SK-N-SH (cell line): ENCODE measurements at regions of chr11 and their contacts with region 1.

Region 1: DNA sequence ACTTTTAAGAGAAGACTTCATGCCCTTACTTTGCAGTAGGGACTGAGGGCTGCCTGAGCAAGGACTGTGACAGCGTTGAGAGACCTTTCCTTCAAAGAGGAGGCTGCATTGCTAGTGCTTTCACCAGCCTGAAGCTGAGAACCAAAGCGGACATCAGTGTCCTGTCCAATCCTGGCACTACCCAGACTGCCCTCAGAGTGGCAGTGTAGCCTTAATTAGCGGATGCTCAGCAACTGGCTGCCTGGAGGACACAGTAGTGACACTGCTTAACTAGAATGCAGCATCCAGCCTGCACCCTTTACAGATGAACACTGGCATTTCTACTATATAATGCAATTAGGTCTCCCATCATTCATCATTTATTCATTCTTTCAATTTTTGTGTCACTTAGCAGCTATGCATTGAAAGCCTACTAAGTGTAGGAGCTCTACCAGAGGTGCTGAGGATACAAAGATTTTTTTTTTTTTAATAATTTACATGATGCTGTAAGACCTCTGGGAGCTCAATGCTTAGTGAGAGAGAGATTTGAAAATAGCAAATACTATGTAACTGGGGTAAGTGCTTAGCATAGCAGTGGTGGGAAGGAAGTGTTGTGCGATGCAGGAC is 36.9 kb upstream of the SLC36A4 start:
- DNase-seq: peak; percentile 78
- H3K4me3 ChIP-seq: peak overlapping the region in 1 of 2 experiments; percentile 44; a peak in 1 of 4 replicates
- H3K27ac ChIP-seq: no peak overlapping the region
- H3K4me1 ChIP-seq: no peaks in the 10 kb centered on the region; a peak in 2 of 4 replicates
- H3K27me3 ChIP-seq: peaks cover 13% of the 10 kb centered on the region
- CTCF ChIP-seq: peak; percentile 87
- EP300 ChIP-seq: no peak
- RAD21 ChIP-seq: peak; percentile 99

Region 2: GRCh38 chr11:92480499-92480898 is 754.2 kb before region 1 on chr11:
- CTCF ChIA-PET with region 1: no interaction called
- POLR2A ChIA-PET with region 1: no interaction called
- DNase-seq: no peak
- H3K4me3 ChIP-seq: no peak overlapping the region
- H3K27ac ChIP-seq: no peak overlapping the region
- H3K4me1 ChIP-seq: no peaks in the 10 kb centered on the region
- H3K27me3 ChIP-seq: no peaks in the 10 kb centered on the region
- CTCF ChIP-seq: no peak
- EP300 ChIP-seq: no peak
- RAD21 ChIP-seq: no peak

Region 3: GRCh38 chr11:93084727-93085505 is 149.8 kb before region 1 on chr11:
- CTCF ChIA-PET with region 1: no interaction called
- POLR2A ChIA-PET with region 1: no interaction called
- DNase-seq: no peak
- H3K4me3 ChIP-seq: no peak overlapping the region
- H3K27ac ChIP-seq: no peak overlapping the region
- H3K4me1 ChIP-seq: no peaks in the 10 kb centered on the region
- H3K27me3 ChIP-seq: no peaks in the 10 kb centered on the region
- CTCF ChIP-seq: no peak
- EP300 ChIP-seq: no peak
- RAD21 ChIP-seq: no peak

Region 4: GRCh38 chr11:93248602-93249001 is 13.9 kb after region 1 on chr11:
- CTCF ChIA-PET with region 1: interaction called, 21 read pairs
- POLR2A ChIA-PET with region 1: no interaction called
- DNase-seq: no peak
- H3K4me3 ChIP-seq: no peak overlapping the region
- H3K27ac ChIP-seq: no peak overlapping the region
- H3K4me1 ChIP-seq: no peaks in the 10 kb centered on the region
- H3K27me3 ChIP-seq: no peaks in the 10 kb centered on the region
- CTCF ChIP-seq: peak; percentile 42
- EP300 ChIP-seq: no peak
- RAD21 ChIP-seq: no peak; the same call in 1 of the 2 replicates

Region 5: DNA sequence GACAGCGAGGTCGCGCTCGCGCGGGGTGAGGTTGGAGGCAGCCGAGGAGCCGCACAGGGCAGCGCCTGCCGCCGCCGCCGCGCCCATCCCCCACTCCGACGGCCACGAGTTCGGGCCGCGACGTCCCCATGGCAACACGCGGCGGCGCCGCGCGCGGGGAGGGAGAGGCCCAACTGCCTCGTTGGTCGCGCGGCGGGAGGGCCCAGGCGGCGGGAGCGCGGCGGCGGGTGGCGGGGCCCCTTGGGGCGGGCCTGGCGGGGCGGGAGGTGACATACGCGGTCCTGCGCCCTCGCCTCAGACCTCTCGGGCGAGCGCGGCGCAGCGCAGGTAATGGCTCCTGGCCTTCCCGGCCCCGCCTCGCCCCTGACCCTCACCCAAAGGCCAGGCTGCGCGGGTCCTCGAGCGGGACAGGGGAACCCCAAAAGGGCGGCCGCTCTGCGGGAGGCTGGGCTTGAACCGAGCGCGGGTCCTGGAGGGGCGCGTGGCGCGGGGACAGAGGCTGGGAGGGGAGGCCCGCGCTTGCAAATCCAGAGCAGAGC is 95.8 kb after region 1 on chr11 and contains the start of gene DEUP1:
- CTCF ChIA-PET with region 1: no interaction called
- POLR2A ChIA-PET with region 1: no interaction called
- DNase-seq: peak; percentile 80
- H3K4me3 ChIP-seq: peak within 1 kb of the TSS in 1 of 2 experiments; percentile 36; a peak in 2 of 4 replicates
- H3K27ac ChIP-seq: no peak within 1 kb of the TSS
- H3K4me1 ChIP-seq: no peaks in the 10 kb centered on the region; a peak in 1 of 4 replicates
- H3K27me3 ChIP-seq: no peaks in the 10 kb centered on the region
- CTCF ChIP-seq: no peak
- EP300 ChIP-seq: no peak
- RAD21 ChIP-seq: no peak
- polyA plus RNA-seq, gene DEUP1: not detected in 2 replicates

Region 6: DNA sequence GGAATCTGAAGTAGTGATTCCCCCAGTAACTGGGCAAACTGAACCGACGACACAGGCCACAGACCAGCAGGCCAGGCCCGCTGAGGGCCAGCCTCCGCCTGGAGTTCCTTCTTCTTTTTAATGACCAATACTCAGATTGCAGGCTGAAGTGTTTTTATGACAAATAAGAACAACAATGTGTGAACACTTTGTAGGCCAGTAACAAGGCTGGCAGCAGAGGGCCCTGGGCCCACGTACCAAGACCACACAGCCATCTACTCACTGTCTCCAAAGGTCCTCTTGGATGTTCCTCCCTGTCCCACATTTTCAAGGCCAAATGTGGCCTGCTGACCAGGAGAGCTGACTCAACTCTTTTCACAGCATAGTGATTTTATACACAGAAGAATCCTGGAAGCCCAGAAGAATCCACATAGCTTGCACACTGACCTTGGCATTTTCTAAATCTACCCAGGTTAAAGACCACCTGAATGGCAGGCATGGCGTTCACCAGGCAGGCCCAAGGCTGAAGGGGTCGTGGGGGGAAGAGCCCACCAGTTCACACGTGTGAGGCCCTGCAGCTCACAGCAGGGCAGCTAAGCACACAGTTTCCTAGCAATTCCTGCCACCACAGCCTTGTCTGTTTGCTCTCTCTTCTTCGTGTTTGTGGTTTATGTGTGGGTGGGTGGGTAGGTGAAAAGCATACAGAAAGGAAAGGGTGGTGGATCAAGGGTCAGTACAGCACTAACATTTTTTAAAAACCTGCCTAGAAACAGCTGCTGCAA is 295.2 kb after region 1 on chr11:
- CTCF ChIA-PET with region 1: interaction called, 202 read pairs
- POLR2A ChIA-PET with region 1: no interaction called
- DNase-seq: no peak
- H3K4me3 ChIP-seq: no peak overlapping the region
- H3K27ac ChIP-seq: no peak overlapping the region
- H3K4me1 ChIP-seq: no peaks in the 10 kb centered on the region
- H3K27me3 ChIP-seq: no peaks in the 10 kb centered on the region
- CTCF ChIP-seq: no peak
- EP300 ChIP-seq: no peak
- RAD21 ChIP-seq: no peak

Region 7: DNA sequence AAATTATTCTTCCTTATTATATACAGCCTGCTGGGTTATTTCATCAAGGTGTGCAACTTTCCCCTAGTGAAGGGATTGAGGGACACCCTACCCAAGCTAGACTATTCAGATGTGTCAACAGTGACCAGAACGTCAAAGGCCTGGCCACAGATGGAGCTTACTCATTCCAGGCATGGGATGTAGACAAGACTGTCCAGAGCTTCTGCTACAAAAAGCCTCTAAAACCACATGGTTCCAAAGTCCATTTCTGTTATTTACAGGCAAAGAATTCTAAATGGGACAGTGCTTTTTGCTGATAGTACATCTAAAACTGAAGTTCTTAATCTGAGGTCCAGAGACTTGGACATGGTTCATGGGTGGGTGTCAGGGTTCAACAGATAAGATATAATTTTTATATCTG is 318.2 kb after region 1 on chr11:
- CTCF ChIA-PET with region 1: interaction called, 202 read pairs
- POLR2A ChIA-PET with region 1: no interaction called
- DNase-seq: no peak
- H3K4me3 ChIP-seq: no peak overlapping the region
- H3K27ac ChIP-seq: no peak overlapping the region
- H3K4me1 ChIP-seq: no peaks in the 10 kb centered on the region
- H3K27me3 ChIP-seq: no peaks in the 10 kb centered on the region; the same call in 1 of the 2 replicates
- CTCF ChIP-seq: no peak
- EP300 ChIP-seq: no peak
- RAD21 ChIP-seq: no peak

Region 8: GRCh38 chr11:93652161-93652597 is 417.5 kb after region 1 on chr11:
- CTCF ChIA-PET with region 1: interaction called, 118 read pairs
- POLR2A ChIA-PET with region 1: interaction called, 3 read pairs
- DNase-seq: peak; percentile 19
- H3K4me3 ChIP-seq: no peak overlapping the region
- H3K27ac ChIP-seq: no peak overlapping the region
- H3K4me1 ChIP-seq: peaks cover 0 to 2% of the 10 kb centered on the region in 2 experiments; a peak in 1 of 4 replicates
- H3K27me3 ChIP-seq: peaks cover 7% of the 10 kb centered on the region; the same call in 1 of the 2 replicates
- CTCF ChIP-seq: peak; percentile 80
- EP300 ChIP-seq: no peak
- RAD21 ChIP-seq: peak; percentile 69